HEK293T (cell line): ENCODE measurements at regions of chr20 and their contacts with region 1.

Region 1: DNA sequence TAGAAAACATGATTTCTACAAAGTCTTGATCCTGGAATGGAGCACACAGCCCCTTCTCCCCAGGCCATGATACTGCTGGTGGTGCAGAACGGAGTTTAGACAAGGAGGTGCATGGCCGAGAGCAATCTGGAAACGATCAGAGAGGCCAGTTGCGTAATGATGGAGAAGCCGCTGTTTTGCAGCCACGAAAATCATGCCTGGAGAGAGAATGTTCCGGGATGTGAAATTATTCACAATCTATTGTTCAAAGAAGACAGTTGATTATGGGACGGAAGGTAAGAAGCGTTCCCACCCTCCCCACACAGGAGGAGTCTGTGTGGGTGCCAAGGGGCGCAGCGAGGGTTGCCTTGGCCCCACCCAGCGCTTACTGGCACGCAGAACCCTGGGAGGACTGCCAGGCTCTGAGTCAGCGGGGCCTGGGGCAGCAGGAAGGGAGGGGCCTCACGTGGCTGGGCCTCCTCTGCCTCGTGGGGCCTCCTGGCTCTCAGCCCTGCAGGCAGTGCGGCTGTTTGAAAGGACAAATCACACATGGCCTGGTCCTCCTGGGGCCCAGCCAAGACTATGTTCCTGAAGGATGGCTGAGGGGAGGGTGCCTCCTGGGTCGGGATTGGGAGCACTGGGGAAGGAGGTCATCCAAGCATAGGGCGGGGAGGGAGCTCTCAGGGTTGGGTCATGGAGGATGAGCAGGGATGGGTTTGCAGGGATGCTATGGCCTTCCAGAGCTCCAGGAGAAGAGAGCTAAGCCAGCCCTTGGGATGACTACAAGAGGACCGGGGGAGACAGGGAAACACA is 8.7 kb upstream of the AP5S1 start:
- DNase-seq: peak; percentile 49

Region 2: GRCh38 chr20:3786665-3787323 is 24.9 kb before region 1 on chr20 and contains the start of gene CENPB:
- CTCF ChIA-PET with region 1: interaction called, 4 read pairs
- POLR2A ChIA-PET with region 1: interaction called, 12 read pairs
- DNase-seq: peak; percentile 91